ENCODE measurements at regions of chr19 and their contacts with region 1.

Region 1: GRCh38 chr19:13880059-13881043 is 3.4 kb downstream of the NANOS3 start:
- DNase-seq: peak; percentile 99
- ATAC-seq: peak; percentile 98
- H3K4me3 Mint-ChIP-seq: peak overlapping the region; percentile 25
- H3K27ac Mint-ChIP-seq: peak overlapping the region; percentile 70
- H3K4me1 Mint-ChIP-seq: peaks cover 37% of the 10 kb centered on the region
- H3K27me3 Mint-ChIP-seq: peaks cover 9% of the 10 kb centered on the region

Region 2: DNA sequence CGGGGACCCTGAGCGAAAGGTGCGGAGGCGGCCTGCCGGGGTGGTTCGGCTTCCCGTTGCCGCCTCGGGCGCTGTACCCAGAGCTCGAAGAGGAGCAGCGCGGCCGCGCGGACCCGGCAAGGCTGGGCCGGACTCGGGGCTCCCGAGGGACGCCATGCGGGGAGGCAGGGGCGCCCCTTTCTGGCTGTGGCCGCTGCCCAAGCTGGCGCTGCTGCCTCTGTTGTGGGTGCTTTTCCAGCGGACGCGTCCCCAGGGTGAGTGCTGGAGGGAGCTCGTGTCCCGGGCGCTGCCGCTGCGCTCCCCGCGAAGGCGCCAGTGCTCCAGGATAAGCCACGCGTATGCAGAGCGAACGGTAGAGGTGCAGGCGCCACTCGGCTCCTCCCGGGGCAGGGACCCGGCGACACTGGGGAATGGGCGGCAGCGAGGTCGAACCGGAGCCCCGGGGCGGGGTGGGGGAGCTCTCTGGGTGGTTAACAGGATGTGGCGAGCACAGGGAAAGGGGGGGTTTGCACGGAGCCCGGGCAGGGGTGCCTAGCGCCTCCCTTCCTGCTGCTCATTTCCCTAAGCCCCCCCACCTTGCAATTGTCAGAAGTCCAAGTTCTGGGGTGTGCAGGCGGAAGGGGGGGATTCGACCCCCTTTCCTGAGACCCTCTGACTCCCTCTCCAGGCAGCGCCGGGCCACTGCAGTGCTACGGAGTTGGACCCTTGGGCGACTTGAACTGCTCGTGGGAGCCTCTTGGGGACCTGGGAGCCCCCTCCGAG is 151.5 kb after region 1 on chr19 and contains the start of gene IL27RA:
- CTCF ChIA-PET with region 1: interaction called, 24 read pairs
- DNase-seq: peak; percentile 88
- ATAC-seq: peak; percentile 85
- H3K4me3 Mint-ChIP-seq: peak within 1 kb of the TSS; percentile 90
- H3K27ac Mint-ChIP-seq: peak within 1 kb of the TSS; percentile 90
- H3K4me1 Mint-ChIP-seq: peaks cover 19% of the 10 kb centered on the region
- H3K27me3 Mint-ChIP-seq: peaks cover 6% of the 10 kb centered on the region
- total RNA-seq, gene IL27RA: 29.7 to 60.3 TPM

Region 3: DNA sequence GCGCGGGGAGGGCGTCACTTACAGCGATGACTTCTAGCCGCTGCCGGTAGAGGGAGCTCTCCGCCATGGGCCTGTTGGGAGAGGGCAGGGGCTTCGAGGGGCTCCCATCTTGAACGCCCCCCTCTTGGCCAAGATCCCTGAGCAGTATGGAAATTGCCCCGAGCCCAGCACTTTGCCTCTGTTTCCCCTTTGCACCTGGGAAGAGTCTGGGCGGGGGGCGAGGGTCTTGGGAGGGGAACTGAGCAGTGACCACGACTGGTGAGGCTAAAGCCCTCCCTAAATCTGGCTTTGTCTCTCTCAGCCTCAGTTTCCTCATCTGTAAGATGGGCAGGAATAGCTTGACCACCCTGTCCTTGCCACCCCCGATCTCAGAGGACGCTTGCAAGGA is 178.7 kb after region 1 on chr19:
- CTCF ChIA-PET with region 1: interaction called, 46 read pairs
- DNase-seq: peak; percentile 66
- ATAC-seq: no peak
- H3K4me3 Mint-ChIP-seq: no peak overlapping the region
- H3K27ac Mint-ChIP-seq: no peak overlapping the region
- H3K4me1 Mint-ChIP-seq: peaks cover 12% of the 10 kb centered on the region
- H3K27me3 Mint-ChIP-seq: peaks cover 45% of the 10 kb centered on the region

Region 4: DNA sequence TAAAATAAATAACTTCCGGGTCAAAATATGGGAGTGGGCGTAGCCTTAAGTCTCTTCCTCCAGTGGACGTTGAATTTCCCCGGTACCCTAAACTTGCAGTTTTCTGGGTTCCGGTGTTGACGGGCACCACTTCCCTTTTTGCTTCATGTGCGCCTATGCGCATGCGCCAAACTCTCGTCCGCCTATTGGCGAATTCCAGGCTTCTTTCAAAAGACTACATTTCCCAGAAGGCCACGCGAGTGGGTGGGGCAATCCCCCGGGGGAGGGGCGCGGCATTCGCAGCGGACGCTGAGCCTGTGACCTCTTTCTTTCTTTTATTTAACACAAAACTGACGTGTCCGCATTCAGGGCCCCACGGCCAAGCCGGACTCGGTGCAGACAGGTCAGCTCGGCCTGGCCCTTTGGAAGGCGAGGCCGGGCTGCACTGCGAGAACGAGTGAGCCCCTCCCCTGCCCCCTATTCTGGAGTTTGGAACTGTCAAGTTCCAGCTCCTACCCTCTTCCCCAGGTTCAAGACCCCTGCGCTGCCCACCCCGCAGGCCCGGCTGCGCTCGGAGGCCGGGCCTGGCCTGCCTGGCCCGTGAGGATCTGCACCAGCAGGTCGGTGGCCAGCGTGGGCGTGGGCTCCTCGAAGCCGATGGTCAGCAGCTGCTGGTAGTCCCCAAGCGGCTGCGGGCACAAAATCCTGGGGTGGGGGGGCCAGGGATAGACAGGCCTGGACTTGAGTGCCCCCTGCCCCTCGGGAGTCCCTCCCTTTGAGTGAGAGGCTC is 201.2 kb after region 1 on chr19:
- CTCF ChIA-PET with region 1: interaction called, 10 read pairs
- DNase-seq: peak; percentile 100
- ATAC-seq: peak; percentile 97
- H3K4me3 Mint-ChIP-seq: peak overlapping the region; percentile 92
- H3K27ac Mint-ChIP-seq: peak overlapping the region; percentile 92
- H3K4me1 Mint-ChIP-seq: peaks cover 16% of the 10 kb centered on the region
- H3K27me3 Mint-ChIP-seq: no peaks in the 10 kb centered on the region